Esophagus muscularis mucosa (tissue), 4 donors: ENCODE measurements at regions of chr13 and their contacts with region 1.

Region 1: GRCh38 chr13:109243311-109243951 is 543.0 kb downstream of the IRS2 start:
- DNase-seq: no peak
- H3K4me3 ChIP-seq: peak overlapping the region in 1 of 4 donors; percentile 12
- H3K27ac ChIP-seq: peak overlapping the region; percentile 71 to 85 (median 76)
- H3K4me1 ChIP-seq: peaks cover 13 to 46% (median 37%) of the 10 kb centered on the region in 4 donors
- H3K27me3 ChIP-seq: no peaks in the 10 kb centered on the region
- CTCF ChIP-seq: no peak
- EP300 ChIP-seq: peak; percentile 75
- POLR2A ChIP-seq: no peak

Region 2: GRCh38 chr13:109145631-109146030 is 97.8 kb before region 1 on chr13:
- intact Hi-C with region 1: loop called (anchors 2 kb)
- DNase-seq: no peak
- H3K4me3 ChIP-seq: no peak overlapping the region
- H3K27ac ChIP-seq: peak overlapping the region; percentile 33 to 81 (median 62)
- H3K4me1 ChIP-seq: peaks cover 0 to 56% (median 40%) of the 10 kb centered on the region in 4 donors
- H3K27me3 ChIP-seq: peaks cover 0 to 7% (median 0%) of the 10 kb centered on the region in 4 donors
- CTCF ChIP-seq: peak; percentile 77 to 84 (median 80)
- EP300 ChIP-seq: no peak
- POLR2A ChIP-seq: no peak

Region 3: DNA sequence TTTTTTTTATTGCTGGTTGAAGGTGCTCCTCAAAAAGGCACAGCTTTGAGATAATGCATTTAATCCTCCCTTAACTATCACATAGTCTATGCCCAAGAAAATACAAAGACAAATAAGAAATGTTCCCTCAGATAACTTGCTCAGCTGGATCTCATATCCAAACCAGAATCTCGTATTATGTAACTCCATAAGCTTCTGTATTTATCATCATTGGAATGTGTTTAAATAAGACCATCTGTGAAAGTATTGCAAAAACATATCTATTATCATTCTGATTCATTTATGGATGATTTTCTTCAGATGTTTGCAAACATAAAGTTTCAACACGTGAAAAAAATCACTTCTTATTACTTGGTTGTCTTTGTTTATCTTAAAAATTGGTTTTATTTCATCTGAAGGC is 352.0 kb after region 1 on chr13:
- intact Hi-C with region 1: no loop called
- DNase-seq: no peak
- H3K4me3 ChIP-seq: no peak overlapping the region
- H3K27ac ChIP-seq: no peak overlapping the region
- H3K4me1 ChIP-seq: no peaks in the 10 kb centered on the region
- H3K27me3 ChIP-seq: no peaks in the 10 kb centered on the region
- CTCF ChIP-seq: no peak
- EP300 ChIP-seq: no peak
- POLR2A ChIP-seq: no peak